ENCODE measurements at regions of chr2 and their contacts with region 1.

Region 1: DNA sequence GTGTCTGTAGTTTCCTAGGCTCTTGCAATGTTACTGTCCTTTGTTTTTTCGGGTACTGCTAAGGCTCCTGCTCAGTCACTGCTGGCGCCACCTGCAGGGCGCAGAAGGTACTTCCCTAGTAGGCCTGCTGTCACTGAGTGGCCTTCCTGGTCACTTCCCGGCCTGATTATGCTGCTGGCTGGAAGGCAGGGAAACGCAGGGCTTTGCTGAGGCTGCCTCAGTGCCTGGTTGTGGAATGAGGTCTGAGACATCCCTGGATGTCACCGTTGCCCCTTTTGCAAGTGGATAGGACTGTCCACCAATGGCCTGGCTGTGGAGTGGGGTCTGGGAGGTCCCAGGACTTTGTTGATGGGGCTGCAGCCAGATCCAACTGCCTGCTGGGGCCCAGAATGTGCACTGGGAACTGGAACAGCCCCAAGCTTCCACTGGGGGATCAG is 13.1 kb downstream of the DAW1 start:
- DNase-seq: peak; percentile 75 to 86
- ATAC-seq: no peak
- H3K4me3 ChIP-seq: no peak overlapping the region
- H3K27ac ChIP-seq: no peak overlapping the region
- H3K4me1 ChIP-seq: peaks cover 1 to 4% of the 10 kb centered on the region in 2 donors
- H3K27me3 ChIP-seq: no peaks in the 10 kb centered on the region

Region 2: DNA sequence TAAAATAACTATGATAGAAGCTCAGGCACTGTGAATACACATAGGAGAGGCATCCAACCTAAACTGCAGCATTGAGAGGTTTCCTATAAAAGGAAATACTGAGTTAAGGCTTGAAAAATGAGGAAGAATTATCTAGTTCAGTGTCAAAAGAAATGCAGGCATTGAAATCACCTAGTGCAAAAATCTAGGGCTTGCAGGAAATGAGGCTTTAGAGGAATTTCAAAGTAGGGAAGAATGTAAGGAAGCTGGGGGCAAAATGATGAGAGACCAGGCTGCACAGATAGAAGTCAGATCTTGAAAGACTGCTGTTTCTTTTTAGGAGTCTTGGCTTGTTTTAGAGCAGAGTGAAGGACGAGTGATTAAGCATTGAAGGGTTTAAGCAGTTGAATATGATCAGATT is 313.9 kb before region 1 on chr2:
- intact Hi-C with region 1: no loop called
- DNase-seq: no peak
- ATAC-seq: no peak
- H3K4me3 ChIP-seq: no peak overlapping the region
- H3K27ac ChIP-seq: no peak overlapping the region
- H3K4me1 ChIP-seq: peaks cover 0 to 3% of the 10 kb centered on the region in 2 donors
- H3K27me3 ChIP-seq: no peaks in the 10 kb centered on the region

Region 3: GRCh38 chr2:227661019-227661649 is 223.4 kb before region 1 on chr2:
- intact Hi-C with region 1: loop called in 1 of 2 experiments (anchors 5 kb)
- DNase-seq: no peak
- ATAC-seq: no peak
- H3K4me3 ChIP-seq: no peak overlapping the region
- H3K27ac ChIP-seq: no peak overlapping the region
- H3K4me1 ChIP-seq: no peaks in the 10 kb centered on the region
- H3K27me3 ChIP-seq: peaks cover 0 to 1% of the 10 kb centered on the region in 2 donors

Region 4: GRCh38 chr2:227696787-227697679 is 187.5 kb before region 1 on chr2:
- intact Hi-C with region 1: no loop called
- DNase-seq: no peak
- ATAC-seq: no peak
- H3K4me3 ChIP-seq: no peak overlapping the region
- H3K27ac ChIP-seq: no peak overlapping the region
- H3K4me1 ChIP-seq: no peaks in the 10 kb centered on the region
- H3K27me3 ChIP-seq: no peaks in the 10 kb centered on the region

Region 5: GRCh38 chr2:228657807-228658402 is 773.4 kb after region 1 on chr2:
- intact Hi-C with region 1: loop called in 1 of 2 experiments (anchors 5 kb)
- DNase-seq: no peak
- ATAC-seq: no peak
- H3K4me3 ChIP-seq: no peak overlapping the region
- H3K27ac ChIP-seq: no peak overlapping the region
- H3K4me1 ChIP-seq: peaks cover 0 to 3% of the 10 kb centered on the region in 2 donors
- H3K27me3 ChIP-seq: no peaks in the 10 kb centered on the region